ENCODE measurements at regions of chr22 and their contacts with region 1.

Region 1: DNA sequence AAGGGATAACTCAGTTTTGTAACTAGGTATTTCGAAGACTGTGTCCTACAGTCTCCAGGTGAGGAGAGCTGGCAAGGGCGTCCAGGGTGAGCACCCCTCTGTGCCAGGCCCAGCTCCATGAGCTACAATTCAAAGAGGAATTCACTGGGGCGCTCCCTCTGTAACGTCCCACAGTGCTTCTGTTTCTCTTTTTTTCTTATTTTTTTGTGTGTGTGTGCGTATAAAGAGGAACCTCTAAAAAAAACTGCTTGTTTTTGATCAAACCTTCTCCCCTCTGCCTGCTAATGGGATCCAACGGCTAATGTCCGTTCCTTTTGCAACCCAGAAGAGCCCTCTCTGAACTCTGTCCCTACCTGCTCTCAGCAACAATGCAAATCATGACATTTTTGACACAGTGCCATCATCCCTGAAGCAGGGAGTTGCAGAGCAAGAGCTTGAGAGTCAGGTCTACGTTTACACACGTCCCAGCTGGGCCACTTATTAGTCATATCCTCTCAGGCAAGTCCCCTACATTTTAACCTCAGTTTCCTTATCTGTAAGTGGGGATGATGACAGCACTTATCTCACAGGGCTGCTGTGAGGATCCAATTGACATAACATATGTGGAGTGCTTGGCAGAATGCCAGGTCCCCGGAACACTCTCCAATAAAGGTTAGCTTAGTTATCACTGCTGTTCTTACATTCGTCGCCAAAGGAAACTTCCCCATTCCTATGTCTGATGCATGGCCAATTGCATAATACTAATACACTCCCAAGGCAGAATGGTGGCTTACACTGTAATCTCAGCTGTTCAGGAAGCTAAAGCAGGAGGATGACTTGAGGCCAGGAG is 16.9 kb downstream of the ASCC2 start:
- DNase-seq: peak; percentile 86 to 100
- H3K4me3 ChIP-seq: no peak overlapping the region
- H3K27ac ChIP-seq: peak overlapping the region; percentile 60
- H3K4me1 ChIP-seq: peaks cover 28% of the 10 kb centered on the region
- H3K27me3 ChIP-seq: no peaks in the 10 kb centered on the region
- CTCF ChIP-seq: no peak

Region 2: GRCh38 chr22:29580200-29580810 is 240.9 kb before region 1 on chr22:
- CTCF ChIA-PET with region 1: no interaction called
- POLR2A ChIA-PET with region 1: no interaction called
- intact Hi-C with region 1: loop called (anchors 1 kb)
- DNase-seq: no peak
- H3K4me3 ChIP-seq: peak overlapping the region; percentile 96
- H3K27ac ChIP-seq: no peak overlapping the region
- H3K4me1 ChIP-seq: peaks cover 17% of the 10 kb centered on the region
- H3K27me3 ChIP-seq: no peaks in the 10 kb centered on the region
- CTCF ChIP-seq: no peak

Region 3: DNA sequence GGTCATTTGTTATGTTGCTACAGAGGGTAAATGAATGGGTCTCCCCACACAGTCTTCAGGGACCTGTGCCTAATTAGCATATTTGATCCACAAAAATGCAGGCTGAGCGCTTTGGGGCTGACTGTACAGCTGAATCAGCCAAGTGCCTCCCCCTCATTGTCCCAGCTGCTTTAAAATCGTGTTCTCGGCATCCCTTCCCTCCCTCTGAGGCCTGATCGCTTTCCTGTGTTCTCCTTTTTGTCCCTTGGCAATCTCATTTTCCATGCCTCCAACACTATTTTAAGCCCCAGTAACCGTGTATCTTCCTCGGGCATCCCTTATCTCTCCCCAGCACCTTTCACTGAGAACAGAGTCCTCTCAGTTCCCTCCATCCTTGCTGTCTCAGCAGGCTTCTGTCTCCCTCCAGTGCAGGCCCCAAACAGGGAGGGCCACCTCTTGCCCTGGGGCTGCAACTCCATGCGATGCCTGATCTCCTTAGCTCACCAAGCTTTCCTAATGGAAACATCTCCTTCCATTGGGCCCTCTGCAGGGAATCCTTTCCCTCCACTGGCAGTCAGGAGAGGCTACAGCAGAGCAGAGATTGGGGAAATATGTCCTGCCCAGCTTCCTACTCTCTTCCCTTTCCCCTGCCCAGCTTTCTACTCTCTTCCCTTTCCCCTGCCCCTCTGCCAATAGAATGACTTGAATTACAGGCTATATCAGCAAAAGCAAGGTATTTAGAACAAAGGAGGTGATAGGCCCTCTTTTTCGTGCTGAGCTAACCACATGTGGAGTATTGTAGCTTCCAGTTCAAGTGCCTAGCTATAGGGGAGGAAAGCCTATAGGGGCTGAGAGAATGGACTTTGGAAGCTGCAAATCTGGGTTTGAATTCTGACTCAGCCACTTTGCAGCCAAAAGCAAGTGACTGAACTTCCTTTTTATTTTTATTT is 40.2 kb before region 1 on chr22:
- CTCF ChIA-PET with region 1: no interaction called
- POLR2A ChIA-PET with region 1: interaction called, 7 read pairs
- intact Hi-C with region 1: loop called (anchors 5 kb)
- DNase-seq: peak; percentile 48 to 80
- H3K4me3 ChIP-seq: peak overlapping the region; percentile 6; the same call in 1 of the 2 replicates
- H3K27ac ChIP-seq: peak overlapping the region; percentile 66
- H3K4me1 ChIP-seq: peaks cover 60% of the 10 kb centered on the region
- H3K27me3 ChIP-seq: no peaks in the 10 kb centered on the region
- CTCF ChIP-seq: no peak

Region 4: DNA sequence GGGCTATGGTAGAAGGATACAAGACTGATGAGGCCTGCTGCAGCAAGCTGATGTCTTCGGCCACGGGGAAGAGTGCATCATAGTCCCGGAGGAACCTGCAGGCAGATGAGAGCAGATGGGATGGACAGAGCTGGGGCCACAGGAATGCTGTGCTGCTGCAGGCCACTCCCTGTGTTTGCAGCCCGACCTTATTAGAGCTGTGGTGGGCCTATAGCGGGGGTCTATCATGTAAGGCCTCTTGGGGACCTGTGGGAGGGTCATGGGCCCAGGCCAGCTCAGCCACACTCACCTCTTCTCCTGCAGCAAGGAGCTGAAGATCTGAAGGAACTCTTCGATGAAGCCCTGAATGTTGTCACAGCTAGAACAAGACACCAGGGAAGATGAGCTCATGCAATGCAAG is 15.0 kb before region 1 on chr22:
- CTCF ChIA-PET with region 1: no interaction called
- POLR2A ChIA-PET with region 1: no interaction called
- intact Hi-C with region 1: no loop called
- DNase-seq: no peak
- H3K4me3 ChIP-seq: no peak overlapping the region
- H3K27ac ChIP-seq: no peak overlapping the region
- H3K4me1 ChIP-seq: peaks cover 47% of the 10 kb centered on the region
- H3K27me3 ChIP-seq: no peaks in the 10 kb centered on the region
- CTCF ChIP-seq: no peak

Region 5: DNA sequence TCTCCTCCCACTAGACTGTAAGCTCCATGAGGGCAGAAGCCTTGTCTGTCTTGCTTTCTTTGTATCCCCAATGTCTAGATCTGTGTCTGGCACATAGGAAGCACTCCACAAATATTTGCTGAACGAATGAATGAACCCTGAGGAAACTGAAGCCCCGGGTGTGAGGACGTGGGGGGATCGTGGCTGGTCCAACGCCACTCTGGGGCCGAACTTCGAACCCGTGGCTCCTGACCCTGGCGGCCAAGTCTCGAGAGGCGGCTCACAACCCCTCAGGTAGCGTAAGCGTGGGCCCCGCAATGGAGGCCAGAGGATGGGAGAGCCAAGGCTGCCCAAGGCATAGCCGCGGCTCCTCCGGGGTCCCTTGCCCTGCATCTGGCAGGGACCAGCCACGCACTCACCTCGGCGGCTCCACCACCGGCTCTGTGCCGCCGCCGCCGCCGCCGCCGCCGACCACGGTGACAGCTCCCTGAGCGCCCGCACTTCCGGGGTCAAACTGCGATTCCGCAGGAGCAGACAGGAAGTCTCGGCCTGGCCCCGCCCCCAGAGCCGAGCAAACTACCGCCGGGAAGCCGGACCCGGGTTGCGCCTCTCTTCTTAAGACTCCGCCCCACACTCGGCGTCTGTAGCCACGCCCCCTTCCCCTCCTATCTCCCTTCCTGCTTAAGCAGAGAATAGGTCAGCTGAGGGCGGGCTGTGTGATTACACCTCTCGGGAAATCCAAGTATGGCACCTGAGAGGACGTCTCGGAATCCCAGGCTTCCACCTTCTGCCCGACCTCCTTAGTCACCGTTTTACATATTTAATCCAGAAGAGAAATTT is 16.8 kb after region 1 on chr22 and contains the start of gene ASCC2:
- CTCF ChIA-PET with region 1: no interaction called
- POLR2A ChIA-PET with region 1: no interaction called
- intact Hi-C with region 1: loop called (anchors 2 kb)
- DNase-seq: peak; percentile 95
- H3K4me3 ChIP-seq: peak within 1 kb of the TSS; percentile 95
- H3K27ac ChIP-seq: peak within 1 kb of the TSS; percentile 67
- H3K4me1 ChIP-seq: peaks cover 32% of the 10 kb centered on the region
- H3K27me3 ChIP-seq: no peaks in the 10 kb centered on the region
- CTCF ChIP-seq: no peak
- total RNA-seq, gene ASCC2: 39.9 and 43.3 TPM in 2 replicates

Region 6: DNA sequence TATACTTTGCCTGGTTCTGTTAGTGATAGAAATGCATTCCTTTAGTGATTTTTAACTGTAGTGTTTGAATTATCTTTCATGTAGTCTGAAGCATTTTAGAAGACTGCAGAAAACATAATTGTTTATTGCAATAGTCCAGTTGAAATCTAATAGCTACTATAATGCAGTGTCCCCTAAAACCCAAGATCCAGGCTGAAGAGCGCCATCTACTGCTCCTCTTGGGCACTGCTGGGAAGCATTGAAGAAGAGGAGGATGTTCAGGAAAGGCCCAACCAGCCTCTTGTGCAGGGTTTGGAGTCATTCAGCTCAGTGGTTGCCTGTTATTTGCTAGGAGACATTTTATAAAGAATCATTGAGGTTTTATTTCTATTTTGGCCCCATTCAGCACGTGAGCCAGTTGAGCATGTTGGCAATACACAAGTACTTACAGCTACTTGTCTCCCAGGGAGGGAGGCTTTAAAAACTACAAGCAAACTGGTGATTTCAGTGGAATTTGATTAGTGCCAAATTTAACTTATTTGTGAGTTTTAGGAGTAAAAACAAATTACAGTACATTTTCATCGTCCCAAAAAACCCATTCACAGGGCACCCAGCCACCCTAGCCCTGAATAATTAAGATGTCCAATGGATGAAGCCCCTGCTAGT is 184.2 kb after region 1 on chr22:
- CTCF ChIA-PET with region 1: no interaction called
- POLR2A ChIA-PET with region 1: no interaction called
- intact Hi-C with region 1: loop called (anchors 5 kb)
- DNase-seq: peak; percentile 49 to 66
- H3K4me3 ChIP-seq: no peak overlapping the region
- H3K27ac ChIP-seq: no peak overlapping the region
- H3K4me1 ChIP-seq: no peaks in the 10 kb centered on the region
- H3K27me3 ChIP-seq: no peaks in the 10 kb centered on the region
- CTCF ChIP-seq: peak; percentile 98

Measured in PC-9 (cell line).